Naive thymus-derived CD4-positive, alpha-beta T cell (primary cell): ENCODE measurements at regions of chr19 and their contacts with region 1.

Region 1: DNA sequence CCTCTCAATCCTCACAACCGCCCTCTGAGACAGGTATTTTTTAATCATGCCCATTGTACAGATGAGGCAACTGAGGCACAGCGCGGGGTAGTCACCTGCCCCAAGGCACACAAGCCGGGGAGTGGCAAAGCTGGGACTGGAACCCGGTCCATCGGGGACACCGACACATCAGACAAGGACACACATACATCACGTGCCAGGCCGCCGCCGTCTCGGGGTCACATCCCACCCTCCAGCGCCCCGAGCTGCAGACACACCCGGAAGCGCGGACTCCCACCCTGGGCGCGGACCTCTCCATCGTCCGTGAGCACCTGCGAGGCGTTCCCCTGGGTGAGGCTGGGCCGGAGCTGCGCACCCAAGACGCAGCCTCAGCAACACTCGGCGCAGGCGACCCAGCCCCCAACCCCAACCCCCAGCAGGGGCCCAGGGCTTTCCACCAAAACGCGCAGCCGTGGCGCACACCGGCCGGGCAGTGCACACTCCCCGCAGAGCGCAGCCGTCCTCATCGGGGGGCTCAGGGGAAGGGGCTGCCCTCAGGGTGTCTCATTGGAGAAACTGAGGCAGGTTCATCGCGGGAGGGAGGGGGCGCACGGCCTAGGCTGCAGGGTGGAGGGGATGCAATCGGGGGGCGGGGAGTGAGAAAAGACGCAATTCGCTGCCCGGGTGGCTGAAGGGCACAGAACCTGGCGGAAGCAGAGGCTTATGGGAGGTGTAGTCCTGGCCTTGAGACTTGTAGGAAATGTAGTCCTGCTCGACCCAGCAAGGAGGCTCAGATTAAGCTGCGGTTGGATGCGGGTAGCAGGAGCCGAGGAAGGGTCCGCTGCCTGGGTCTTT is 1.9 kb upstream of the LMTK3 start:
- DNase-seq: peak in 8 of 9 donors; percentile 69 to 84 (median 78)
- ATAC-seq: peak; percentile 77
- H3K4me3 ChIP-seq: peak overlapping the region; percentile 72
- H3K4me3 Mint-ChIP-seq: no peak overlapping the region
- H3K27ac ChIP-seq: peak overlapping the region; percentile 82
- H3K27ac Mint-ChIP-seq: peak overlapping the region in 3 of 9 donors; percentile 68 to 91 (median 90)
- H3K4me1 ChIP-seq: peaks cover 21 to 22% of the 10 kb centered on the region in 2 donors
- H3K4me1 Mint-ChIP-seq: peaks cover 11 to 18% (median 13%) of the 10 kb centered on the region in 7 donors
- H3K27me3 ChIP-seq: no peaks in the 10 kb centered on the region
- H3K27me3 Mint-ChIP-seq: no peaks in the 10 kb centered on the region

Region 2: GRCh38 chr19:48170038-48170812 is 343.3 kb before region 1 on chr19 and contains the starts of genes LIG1 and ZSWIM9:
- CTCF ChIA-PET with region 1: no interaction called
- POLR2A ChIA-PET with region 1: no interaction called
- intact Hi-C with region 1: loop called in 1 of 2 experiments (anchors 1 kb)
- DNase-seq: peak; percentile 87 to 96 (median 94)
- ATAC-seq: peak; percentile 89
- H3K4me3 ChIP-seq: peak within 1 kb of the TSS; percentile 98
- H3K4me3 Mint-ChIP-seq: peak within 1 kb of the TSS; percentile 90 to 100 (median 97)
- H3K27ac ChIP-seq: peak within 1 kb of the TSS; percentile 94
- H3K27ac Mint-ChIP-seq: peak within 1 kb of the TSS; percentile 92 to 100 (median 97)
- H3K4me1 ChIP-seq: peaks cover 14 to 16% of the 10 kb centered on the region in 2 donors
- H3K4me1 Mint-ChIP-seq: peaks cover 20 to 44% (median 32%) of the 10 kb centered on the region in 7 donors
- H3K27me3 ChIP-seq: no peaks in the 10 kb centered on the region
- H3K27me3 Mint-ChIP-seq: no peaks in the 10 kb centered on the region
- total RNA-seq, gene LIG1: 61.0 to 134 (median 122) TPM
- total RNA-seq, gene ZSWIM9: 5.0 to 11.6 (median 7.4) TPM

Region 3: DNA sequence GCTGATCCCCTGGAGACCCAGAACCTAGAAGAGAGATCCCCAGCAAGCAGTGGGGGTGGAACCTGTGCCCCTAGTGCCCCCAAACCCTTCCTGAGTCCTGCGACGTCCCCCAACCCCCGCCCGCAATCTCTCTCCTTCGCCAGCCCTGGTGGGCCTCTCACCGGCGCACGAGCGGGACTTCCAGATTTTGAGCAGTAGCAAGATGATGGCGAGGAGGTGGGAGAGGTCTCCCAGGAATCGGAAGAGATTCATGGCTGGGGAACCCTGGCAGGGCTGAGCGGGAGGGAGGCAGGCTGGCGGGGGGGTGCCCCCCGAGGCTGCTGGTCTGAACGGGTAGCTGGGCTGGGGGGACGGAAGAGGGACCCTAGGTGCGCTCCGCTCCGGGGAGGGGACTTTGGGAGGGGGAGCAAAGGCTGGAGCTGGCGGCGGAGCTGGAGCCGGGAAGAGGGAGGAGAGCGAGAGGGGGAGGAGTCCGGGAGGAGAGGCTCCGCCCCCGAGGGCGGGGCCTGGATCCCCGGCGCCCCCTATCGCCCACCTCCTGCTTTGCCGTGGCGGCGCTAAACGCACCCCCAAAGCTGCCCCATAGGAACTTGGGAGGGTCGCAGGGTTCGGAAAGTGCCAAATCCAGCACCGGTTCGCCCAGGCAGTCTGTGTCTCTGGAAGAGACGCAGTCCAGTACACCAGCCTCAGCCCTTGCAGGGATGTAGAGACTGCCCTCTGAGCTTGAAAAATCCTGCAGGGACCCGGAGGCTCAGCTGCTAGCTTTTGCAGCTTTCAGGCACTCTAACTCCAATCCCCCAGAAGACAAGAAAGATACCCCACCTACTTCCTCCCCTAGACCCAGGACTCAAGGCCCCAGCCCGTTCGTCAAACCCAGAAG is 122.2 kb before region 1 on chr19 and contains the start of gene KDELR1:
- CTCF ChIA-PET with region 1: no interaction called
- POLR2A ChIA-PET with region 1: no interaction called
- intact Hi-C with region 1: loop called in 1 of 2 experiments (anchors 5 kb)
- DNase-seq: peak; percentile 55 to 89 (median 72)
- ATAC-seq: peak; percentile 92
- H3K4me3 ChIP-seq: peak within 1 kb of the TSS; percentile 96
- H3K4me3 Mint-ChIP-seq: peak within 1 kb of the TSS; percentile 84 to 95 (median 92)
- H3K27ac ChIP-seq: peak within 1 kb of the TSS; percentile 92
- H3K27ac Mint-ChIP-seq: peak within 1 kb of the TSS; percentile 78 to 97 (median 93)
- H3K4me1 ChIP-seq: peaks cover 15 to 32% of the 10 kb centered on the region in 2 donors
- H3K4me1 Mint-ChIP-seq: peaks cover 5 to 46% (median 36%) of the 10 kb centered on the region in 7 donors
- H3K27me3 ChIP-seq: peaks cover 9 to 21% of the 10 kb centered on the region in 2 donors
- H3K27me3 Mint-ChIP-seq: peaks cover 9 to 42% (median 21%) of the 10 kb centered on the region in 5 donors
- total RNA-seq, gene KDELR1: 42.7 to 73.9 (median 52.3) TPM

Region 4: GRCh38 chr19:48492925-48493717 is 20.4 kb before region 1 on chr19:
- CTCF ChIA-PET with region 1: interaction called, 6 read pairs
- POLR2A ChIA-PET with region 1: interaction called, 5 read pairs
- intact Hi-C with region 1: loop called (anchors 1 kb)
- DNase-seq: peak; percentile 69 to 87 (median 78)
- ATAC-seq: peak; percentile 87
- H3K4me3 ChIP-seq: peak overlapping the region; percentile 41
- H3K4me3 Mint-ChIP-seq: peak overlapping the region; percentile 58 to 84 (median 72)
- H3K27ac ChIP-seq: no peak overlapping the region
- H3K27ac Mint-ChIP-seq: peak overlapping the region; percentile 20 to 86 (median 67)
- H3K4me1 ChIP-seq: peaks cover 4 to 25% of the 10 kb centered on the region in 2 donors
- H3K4me1 Mint-ChIP-seq: peaks cover 17 to 51% (median 43%) of the 10 kb centered on the region in 7 donors
- H3K27me3 ChIP-seq: no peaks in the 10 kb centered on the region
- H3K27me3 Mint-ChIP-seq: peaks cover 0 to 57% (median 6%) of the 10 kb centered on the region in 5 donors

Region 5: DNA sequence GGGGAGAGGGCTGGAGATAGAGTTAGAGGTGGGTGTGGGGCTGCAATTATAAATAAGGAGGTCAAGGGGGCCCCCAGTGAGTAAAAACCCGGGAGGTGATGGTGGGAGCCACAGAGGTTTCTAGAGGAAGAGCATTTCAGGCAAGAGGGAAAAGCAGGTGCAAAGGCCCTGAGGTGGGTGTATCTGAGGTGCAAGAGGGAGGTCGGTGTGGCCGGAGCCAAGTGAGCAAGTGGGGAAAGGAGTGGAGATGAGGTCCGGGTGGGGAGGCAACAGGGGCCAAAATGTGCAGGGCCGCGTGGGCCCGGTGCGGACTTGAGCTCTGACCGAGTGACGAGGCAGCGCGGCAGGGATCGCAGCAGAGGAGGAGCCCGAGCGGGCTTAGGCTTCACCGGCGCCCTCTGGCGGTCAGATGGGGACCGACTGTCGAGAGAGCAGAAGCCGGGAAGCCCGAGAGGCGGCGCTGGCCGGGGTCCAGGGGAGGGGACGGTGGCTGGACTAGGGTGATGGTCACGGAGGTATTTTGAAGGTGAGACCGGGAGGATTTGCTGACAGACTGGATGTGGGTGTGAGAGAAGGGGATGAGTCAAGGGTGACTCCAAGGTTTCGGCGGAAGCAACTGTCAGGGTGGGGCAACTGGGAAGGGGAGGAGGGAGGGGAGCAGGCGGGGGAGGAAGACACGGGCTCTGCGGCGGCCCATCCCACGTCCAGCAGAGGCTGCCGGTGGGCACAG is 75.3 kb after region 1 on chr19:
- CTCF ChIA-PET with region 1: interaction called, 24 read pairs
- POLR2A ChIA-PET with region 1: interaction called, 9 read pairs
- intact Hi-C with region 1: no loop called
- DNase-seq: peak; percentile 65 to 92 (median 81)
- ATAC-seq: peak; percentile 92
- H3K4me3 ChIP-seq: no peak overlapping the region
- H3K4me3 Mint-ChIP-seq: peak overlapping the region; percentile 51 to 93 (median 78)
- H3K27ac ChIP-seq: no peak overlapping the region
- H3K27ac Mint-ChIP-seq: peak overlapping the region in 6 of 9 donors; percentile 37 to 86 (median 78)
- H3K4me1 ChIP-seq: peaks cover 0 to 3% of the 10 kb centered on the region in 2 donors
- H3K4me1 Mint-ChIP-seq: peaks cover 11 to 27% (median 15%) of the 10 kb centered on the region in 7 donors
- H3K27me3 ChIP-seq: no peaks in the 10 kb centered on the region
- H3K27me3 Mint-ChIP-seq: peaks cover 0 to 5% (median 0%) of the 10 kb centered on the region in 5 donors

Region 6: GRCh38 chr19:48713864-48714758 is 200.6 kb after region 1 on chr19:
- CTCF ChIA-PET with region 1: no interaction called
- POLR2A ChIA-PET with region 1: no interaction called
- intact Hi-C with region 1: loop called in 1 of 2 experiments (anchors 5 kb)
- DNase-seq: peak; percentile 92 to 97 (median 97)
- ATAC-seq: peak; percentile 96
- H3K4me3 ChIP-seq: peak overlapping the region; percentile 95
- H3K4me3 Mint-ChIP-seq: peak overlapping the region; percentile 82 to 92 (median 88)
- H3K27ac ChIP-seq: peak overlapping the region; percentile 79
- H3K27ac Mint-ChIP-seq: peak overlapping the region; percentile 16 to 90 (median 81)
- H3K4me1 ChIP-seq: peaks cover 11 to 12% of the 10 kb centered on the region in 2 donors
- H3K4me1 Mint-ChIP-seq: peaks cover 9 to 24% (median 20%) of the 10 kb centered on the region in 7 donors
- H3K27me3 ChIP-seq: no peaks in the 10 kb centered on the region
- H3K27me3 Mint-ChIP-seq: no peaks in the 10 kb centered on the region